A673 (cell line): ENCODE measurements at regions of chr1 and their contacts with region 1.

Region 1: DNA sequence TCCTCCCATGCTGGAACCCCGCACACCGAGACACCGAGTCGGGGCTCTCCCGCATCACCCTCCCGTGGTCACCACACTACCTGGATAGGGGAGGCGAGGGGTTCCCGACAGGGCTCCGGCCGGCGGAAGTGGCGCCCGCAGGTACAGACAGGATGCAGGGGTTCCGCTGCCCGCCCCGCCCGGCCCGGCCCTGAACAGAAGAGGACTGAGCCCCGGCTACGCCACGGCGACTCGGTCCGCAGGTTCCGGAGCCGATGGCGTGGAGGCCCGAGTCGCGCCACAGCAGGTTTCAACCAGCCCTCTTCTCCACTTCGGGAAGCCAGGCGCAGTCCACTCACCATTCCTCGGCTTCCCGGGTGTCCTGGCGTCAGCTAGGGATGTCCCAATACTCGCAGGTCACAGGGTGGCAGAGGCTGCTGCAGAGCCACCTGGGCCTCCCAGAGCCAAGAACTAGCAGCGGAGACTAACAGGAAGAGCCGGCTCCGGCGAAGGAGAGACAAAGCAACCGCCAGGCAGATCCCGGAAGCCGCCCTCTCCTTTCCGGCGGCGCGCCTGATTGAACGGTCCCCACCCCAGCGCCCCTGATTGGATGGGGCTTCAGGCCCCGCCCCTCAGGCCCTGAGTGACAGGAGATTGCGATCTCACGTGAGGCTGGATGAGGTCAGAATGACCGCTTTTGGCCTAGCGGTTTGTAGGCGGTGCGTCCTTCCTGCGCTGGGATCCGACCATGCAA is at the start of gene ZNF669:
- DNase-seq: peak; percentile 98
- H3K4me3 ChIP-seq: peak within 1 kb of the TSS; percentile 93
- H3K27ac ChIP-seq: peak within 1 kb of the TSS; percentile 85
- H3K4me1 ChIP-seq: no peaks in the 10 kb centered on the region
- H3K27me3 ChIP-seq: peaks cover 8% of the 10 kb centered on the region
- CTCF ChIP-seq: no peak
- total RNA-seq, gene ZNF669: 10.3 and 13.3 TPM in 2 replicates

Region 2: GRCh38 chr1:246875041-246876026 is 228.7 kb before region 1 on chr1:
- CTCF ChIA-PET with region 1: no interaction called
- POLR2A ChIA-PET with region 1: interaction called, 17 read pairs
- intact Hi-C with region 1: no loop called
- DNase-seq: no peak
- H3K4me3 ChIP-seq: no peak overlapping the region
- H3K27ac ChIP-seq: no peak overlapping the region
- H3K4me1 ChIP-seq: no peaks in the 10 kb centered on the region
- H3K27me3 ChIP-seq: no peaks in the 10 kb centered on the region
- CTCF ChIP-seq: no peak

Region 3: DNA sequence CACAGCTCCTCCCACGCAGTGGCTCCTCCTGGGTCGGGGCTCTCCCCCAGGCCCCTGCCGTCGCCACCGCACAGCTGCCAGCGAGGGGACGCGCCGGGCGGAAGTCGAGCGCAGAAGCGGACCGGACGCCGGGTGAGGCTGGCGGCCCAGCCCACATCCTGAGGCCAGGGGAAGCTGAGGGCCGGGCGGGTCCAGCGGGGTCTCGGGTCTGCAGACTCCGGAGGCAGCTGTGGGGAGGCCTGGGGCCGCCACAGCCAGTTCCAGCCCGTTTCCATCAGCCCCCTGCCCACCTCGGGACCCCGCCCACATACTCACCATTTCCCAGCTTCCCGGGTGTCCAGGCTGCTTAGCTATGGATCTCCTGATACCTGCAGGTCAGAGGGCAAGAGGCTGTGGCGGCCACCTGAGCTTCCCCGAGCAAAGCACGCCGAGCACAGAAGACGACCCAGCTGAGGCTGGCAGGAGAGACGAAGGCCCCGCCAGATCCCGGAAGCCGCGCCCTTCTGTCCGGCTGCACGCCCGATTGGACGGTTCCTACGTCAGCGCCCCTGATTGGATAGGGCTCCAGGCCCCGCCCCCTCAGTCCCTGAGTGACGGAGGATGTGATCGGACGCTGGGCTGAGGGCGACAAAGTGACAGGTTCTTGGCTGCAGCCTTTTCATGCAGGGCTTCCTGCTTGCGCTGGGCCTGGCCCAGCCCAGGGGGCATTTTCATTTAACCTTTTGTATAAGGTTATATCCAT is 106.5 kb after region 1 on chr1:
- CTCF ChIA-PET with region 1: no interaction called
- POLR2A ChIA-PET with region 1: no interaction called
- intact Hi-C with region 1: no loop called
- DNase-seq: peak; percentile 98
- H3K4me3 ChIP-seq: peak overlapping the region; percentile 91
- H3K27ac ChIP-seq: peak overlapping the region; percentile 73
- H3K4me1 ChIP-seq: no peaks in the 10 kb centered on the region
- H3K27me3 ChIP-seq: peaks cover 14% of the 10 kb centered on the region
- CTCF ChIP-seq: no peak